ENCODE measurements at regions of chr6 and their contacts with region 1.

Region 1: GRCh38 chr6:166382933-166383801 is at the start of gene MPC1:
- DNase-seq: peak; percentile 94 to 98
- H3K4me3 ChIP-seq: peak within 1 kb of the TSS; percentile 93 to 96
- H3K27ac ChIP-seq: peak within 1 kb of the TSS; percentile 92 to 94
- H3K4me1 ChIP-seq: peaks cover 0 to 33% (median 20%) of the 10 kb centered on the region in 4 donors
- H3K27me3 ChIP-seq: no peaks in the 10 kb centered on the region
- CTCF ChIP-seq: no peak

Region 2: GRCh38 chr6:166342349-166343149 is 40.6 kb before region 1 on chr6 and contains the start of gene SFT2D1:
- intact Hi-C with region 1: loop called (anchors 5 kb)
- DNase-seq: peak; percentile 83 to 90
- H3K4me3 ChIP-seq: peak within 1 kb of the TSS; percentile 63 to 75
- H3K27ac ChIP-seq: peak within 1 kb of the TSS; percentile 83 to 87
- H3K4me1 ChIP-seq: peaks cover 0 to 46% (median 23%) of the 10 kb centered on the region in 4 donors
- H3K27me3 ChIP-seq: no peaks in the 10 kb centered on the region
- CTCF ChIP-seq: no peak

Region 3: DNA sequence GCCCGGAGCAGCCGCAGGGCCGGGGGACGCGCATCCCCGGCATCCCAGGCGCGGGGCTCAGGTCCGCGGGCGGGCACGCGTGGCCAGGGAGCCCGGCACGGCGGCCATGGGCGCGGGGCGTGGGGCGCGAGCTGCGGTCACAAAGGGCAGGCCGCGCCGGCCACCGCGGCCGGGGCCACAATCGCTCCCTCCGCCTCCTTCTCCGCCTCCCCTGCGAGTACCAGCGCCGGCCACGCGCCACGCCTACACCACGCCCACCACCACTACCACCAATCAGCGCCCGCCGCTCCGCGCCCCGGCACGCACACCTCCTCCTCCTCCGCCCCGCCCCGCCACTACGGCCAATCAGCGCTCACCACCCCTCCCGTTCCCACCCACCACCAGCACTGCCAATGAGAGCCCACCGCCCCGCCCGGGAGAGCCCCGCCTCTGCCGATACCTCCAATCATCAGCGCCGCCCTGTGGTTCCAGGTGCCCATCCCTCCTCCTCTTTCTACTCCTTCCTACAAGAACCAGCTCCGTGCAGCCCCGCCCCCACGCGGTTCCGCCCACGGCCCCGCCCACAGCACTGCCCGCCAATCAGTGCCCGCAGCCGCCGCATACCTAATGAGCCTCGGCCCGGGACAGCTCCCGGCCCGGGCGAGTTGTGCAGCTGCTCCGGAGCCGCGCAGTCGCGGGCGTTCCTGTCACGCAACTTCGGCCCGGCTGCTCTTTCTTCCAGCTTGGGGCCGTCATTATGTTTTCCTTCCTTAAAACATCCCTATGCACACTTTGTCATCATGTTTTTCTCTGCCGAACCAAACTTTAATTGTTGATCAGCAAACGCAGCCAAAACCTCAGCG is 244.1 kb after region 1 on chr6 and contains the start of gene RPS6KA2:
- intact Hi-C with region 1: loop called (anchors 5 kb)
- DNase-seq: peak; percentile 100
- H3K4me3 ChIP-seq: peak within 1 kb of the TSS; percentile 80 to 83
- H3K27ac ChIP-seq: peak within 1 kb of the TSS; percentile 80 to 81
- H3K4me1 ChIP-seq: peaks cover 0 to 35% (median 8%) of the 10 kb centered on the region in 4 donors
- H3K27me3 ChIP-seq: peaks cover 0 to 7% of the 10 kb centered on the region in 2 donors
- CTCF ChIP-seq: no peak

Measured in tibial artery (tissue), 4 donors.